ENCODE measurements at regions of chr11 and their contacts with region 1.

Region 1: DNA sequence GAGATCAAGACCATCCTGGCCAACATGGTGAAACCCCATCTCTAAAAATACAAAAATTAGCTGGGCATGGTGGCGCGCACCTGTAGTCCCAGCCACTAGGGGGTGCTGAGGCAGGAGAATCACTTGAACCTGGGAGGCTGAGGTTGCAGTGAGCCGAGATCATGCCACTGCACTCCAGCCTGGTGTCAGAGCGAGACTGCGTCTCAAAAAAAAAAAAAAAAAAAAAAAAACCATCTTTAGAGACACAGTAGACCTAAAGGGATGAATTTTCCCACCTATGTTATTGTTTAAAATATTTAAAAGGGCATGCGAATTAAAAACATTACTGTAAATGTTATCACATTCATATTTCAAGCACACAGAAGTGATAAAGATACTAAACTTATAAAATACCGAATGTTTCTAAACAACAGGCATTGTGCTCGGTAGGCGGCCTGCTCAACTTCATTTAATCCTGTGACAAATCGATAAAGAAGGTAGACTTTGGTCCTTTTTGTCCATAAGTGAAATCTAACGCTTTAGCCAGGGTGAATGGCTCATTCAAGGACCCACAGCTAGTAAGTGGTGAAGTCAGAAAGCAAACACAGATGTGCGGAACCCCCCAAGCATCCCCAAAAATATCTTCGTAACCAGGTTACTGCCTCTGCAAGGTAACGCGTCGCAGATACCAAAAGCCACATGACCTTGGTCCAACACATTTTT is 16.1 kb downstream of the NCAPD3 start:
- DNase-seq: peak; percentile 85
- H3K4me3 ChIP-seq: no peak overlapping the region
- H3K27ac ChIP-seq: no peak overlapping the region
- H3K4me1 ChIP-seq: no peaks in the 10 kb centered on the region
- H3K27me3 ChIP-seq: no peaks in the 10 kb centered on the region
- CTCF ChIP-seq: peak; percentile 64 to 84 (median 80)
- POLR2A ChIP-seq: no peak

Region 2: DNA sequence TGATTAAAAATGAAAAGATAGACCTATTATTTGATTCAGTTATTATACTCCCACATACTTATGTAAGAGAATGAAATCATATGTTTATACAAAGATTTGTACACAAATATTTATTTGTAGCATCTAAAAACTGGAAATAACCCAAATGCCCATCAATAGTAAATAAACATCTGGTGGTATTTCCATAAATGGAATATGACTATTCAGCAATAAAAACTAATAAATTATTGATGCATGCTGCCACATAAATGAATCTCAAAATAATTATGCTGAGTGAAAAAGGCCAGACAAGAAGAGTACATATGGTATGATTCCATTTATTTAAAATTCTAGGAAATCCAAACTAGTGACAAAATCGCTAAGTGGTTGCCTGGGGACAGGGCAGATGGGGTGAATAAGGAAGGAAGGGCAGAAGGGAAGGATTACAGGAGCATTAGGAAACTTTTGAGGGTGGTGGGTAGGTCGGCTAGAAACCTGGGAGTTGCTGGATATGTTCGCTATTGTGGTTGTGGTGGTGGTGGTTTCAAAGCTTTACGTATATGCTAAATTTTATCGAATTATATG is 97.4 kb before region 1 on chr11:
- intact Hi-C with region 1: no loop called
- DNase-seq: no peak
- H3K4me3 ChIP-seq: no peak overlapping the region
- H3K27ac ChIP-seq: no peak overlapping the region
- H3K4me1 ChIP-seq: no peaks in the 10 kb centered on the region
- H3K27me3 ChIP-seq: no peaks in the 10 kb centered on the region
- CTCF ChIP-seq: no peak
- POLR2A ChIP-seq: no peak

Region 3: DNA sequence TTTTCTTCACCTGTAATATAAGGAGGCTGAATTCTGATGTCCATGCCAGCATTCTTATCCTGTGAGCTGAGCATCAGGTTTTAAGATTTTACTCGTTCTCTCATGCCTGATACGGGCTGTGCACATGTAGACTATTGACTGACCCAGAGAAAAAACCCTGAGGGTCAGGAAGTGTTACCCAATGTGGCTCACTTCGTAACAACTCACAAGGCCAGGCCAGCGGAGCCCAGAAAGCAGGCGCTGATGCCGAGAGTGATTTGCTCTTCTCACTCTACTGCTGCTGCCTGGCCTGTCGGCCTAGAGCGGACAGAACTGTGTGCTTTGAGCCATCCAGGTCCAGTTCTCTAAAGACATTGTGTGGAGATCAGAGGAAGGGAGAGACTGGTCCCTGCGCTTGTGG is 34.7 kb after region 1 on chr11:
- intact Hi-C with region 1: no loop called
- DNase-seq: no peak
- H3K4me3 ChIP-seq: no peak overlapping the region
- H3K27ac ChIP-seq: no peak overlapping the region
- H3K4me1 ChIP-seq: no peaks in the 10 kb centered on the region
- H3K27me3 ChIP-seq: no peaks in the 10 kb centered on the region
- CTCF ChIP-seq: no peak
- POLR2A ChIP-seq: no peak

Region 4: GRCh38 chr11:134253188-134253993 is 45.7 kb after region 1 on chr11 and contains the starts of genes ACAD8 and THYN1:
- intact Hi-C with region 1: loop called (anchors 10 kb)
- DNase-seq: peak; percentile 99
- H3K4me3 ChIP-seq: peak within 1 kb of the TSS; percentile 68 to 96 (median 88)
- H3K27ac ChIP-seq: peak within 1 kb of the TSS in 7 of 8 donors; percentile 47 to 88 (median 80)
- H3K4me1 ChIP-seq: peaks cover 10 to 70% (median 36%) of the 10 kb centered on the region in 6 donors
- H3K27me3 ChIP-seq: no peaks in the 10 kb centered on the region
- CTCF ChIP-seq: peak; percentile 59 to 78 (median 71)
- POLR2A ChIP-seq: peak in 1 of 3 donors; percentile 74
- total RNA-seq, gene ACAD8: 19.7 to 37.5 (median 28.4) TPM
- total RNA-seq, gene THYN1: 24.5 to 54.8 (median 36.7) TPM